ENCODE measurements at regions of chr7 and their contacts with region 1.

Region 1: GRCh38 chr7:148503875-148504487 is 86.6 kb upstream of the C7orf33 start:
- DNase-seq: peak in 2 of 35 experiments; percentile 10 to 66
- ATAC-seq: no peak
- H3K4me3 ChIP-seq: no peak overlapping the region
- H3K4me3 Mint-ChIP-seq: no peak overlapping the region
- H3K27ac ChIP-seq: no peak overlapping the region
- H3K27ac Mint-ChIP-seq: peak overlapping the region in 1 of 2 donors; percentile 5
- H3K4me1 ChIP-seq: no peaks in the 10 kb centered on the region
- H3K4me1 Mint-ChIP-seq: peaks cover 5 to 15% (median 6%) of the 10 kb centered on the region in 3 donors
- H3K27me3 ChIP-seq: peaks cover 0 to 14% of the 10 kb centered on the region in 2 experiments
- H3K27me3 Mint-ChIP-seq: peaks cover 15 to 25% of the 10 kb centered on the region in 2 donors

Region 2: GRCh38 chr7:148633761-148634160 is 129.8 kb after region 1 on chr7:
- CTCF ChIA-PET with region 1: interaction called in 1 of 2 experiments, 10 read pairs
- POLR2A ChIA-PET with region 1: no interaction called
- DNase-seq: no peak
- ATAC-seq: no peak
- H3K4me3 ChIP-seq: no peak overlapping the region
- H3K4me3 Mint-ChIP-seq: peak overlapping the region in 1 of 3 donors; percentile 44
- H3K27ac ChIP-seq: no peak overlapping the region
- H3K27ac Mint-ChIP-seq: no peak overlapping the region
- H3K4me1 ChIP-seq: peaks cover 15 to 18% of the 10 kb centered on the region in 2 experiments
- H3K4me1 Mint-ChIP-seq: peaks cover 23 to 33% (median 31%) of the 10 kb centered on the region in 3 donors
- H3K27me3 ChIP-seq: peaks cover 0 to 15% of the 10 kb centered on the region in 2 experiments
- H3K27me3 Mint-ChIP-seq: peaks cover 0 to 3% of the 10 kb centered on the region in 2 donors

Region 3: GRCh38 chr7:148753224-148753623 is 249.2 kb after region 1 on chr7:
- CTCF ChIA-PET with region 1: no interaction called
- POLR2A ChIA-PET with region 1: interaction called in 1 of 2 experiments, 11 read pairs
- DNase-seq: no peak
- ATAC-seq: no peak
- H3K4me3 ChIP-seq: no peak overlapping the region
- H3K4me3 Mint-ChIP-seq: no peak overlapping the region
- H3K27ac ChIP-seq: no peak overlapping the region
- H3K27ac Mint-ChIP-seq: peak overlapping the region in 1 of 2 donors; percentile 3
- H3K4me1 ChIP-seq: no peaks in the 10 kb centered on the region
- H3K4me1 Mint-ChIP-seq: peaks cover 15 to 19% (median 16%) of the 10 kb centered on the region in 3 donors
- H3K27me3 ChIP-seq: no peaks in the 10 kb centered on the region
- H3K27me3 Mint-ChIP-seq: no peaks in the 10 kb centered on the region

Region 4: DNA sequence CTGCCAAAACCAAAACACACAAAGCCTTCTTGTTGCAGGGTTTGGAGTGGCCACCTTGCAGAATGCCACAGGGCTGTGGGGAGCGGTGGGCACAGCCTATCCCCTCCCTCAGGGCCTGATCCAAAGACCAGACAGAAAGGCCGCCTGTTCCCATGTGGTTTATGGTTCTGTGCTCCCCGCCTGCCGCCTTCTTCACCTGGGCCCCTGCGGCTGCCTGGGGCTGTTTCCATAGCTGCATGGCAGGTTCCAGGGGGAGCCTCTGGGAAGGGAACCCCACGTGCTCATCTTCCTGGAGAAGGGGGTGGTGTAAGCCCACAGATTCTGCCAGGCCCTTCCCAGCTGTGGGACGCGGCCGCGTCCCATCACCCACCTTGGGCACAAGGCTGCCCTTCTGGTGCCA is 450.8 kb after region 1 on chr7:
- CTCF ChIA-PET with region 1: interaction called in 1 of 2 experiments, 10 read pairs
- POLR2A ChIA-PET with region 1: no interaction called
- DNase-seq: no peak
- ATAC-seq: no peak
- H3K4me3 ChIP-seq: no peak overlapping the region
- H3K4me3 Mint-ChIP-seq: no peak overlapping the region
- H3K27ac ChIP-seq: no peak overlapping the region
- H3K27ac Mint-ChIP-seq: no peak overlapping the region
- H3K4me1 ChIP-seq: no peaks in the 10 kb centered on the region
- H3K4me1 Mint-ChIP-seq: no peaks in the 10 kb centered on the region
- H3K27me3 ChIP-seq: no peaks in the 10 kb centered on the region
- H3K27me3 Mint-ChIP-seq: no peaks in the 10 kb centered on the region